Heart left ventricle (tissue), 16 donors: ENCODE measurements at regions of chr4 and their contacts with region 1.

Region 1: GRCh38 chr4:20422398-20422797 is 170.7 kb downstream of the SLIT2 start:
- DNase-seq: peak in 2 of 5 donors; percentile 22 to 23
- ATAC-seq: peak in 2 of 4 donors; percentile 64 to 74
- H3K4me3 ChIP-seq: no peak overlapping the region
- H3K27ac ChIP-seq: no peak overlapping the region
- H3K4me1 ChIP-seq: peaks cover 0 to 6% (median 0%) of the 10 kb centered on the region in 12 donors
- H3K27me3 ChIP-seq: no peaks in the 10 kb centered on the region
- CTCF ChIP-seq: peak; percentile 15 to 57 (median 35)
- POLR2A ChIP-seq: no peak

Region 2: DNA sequence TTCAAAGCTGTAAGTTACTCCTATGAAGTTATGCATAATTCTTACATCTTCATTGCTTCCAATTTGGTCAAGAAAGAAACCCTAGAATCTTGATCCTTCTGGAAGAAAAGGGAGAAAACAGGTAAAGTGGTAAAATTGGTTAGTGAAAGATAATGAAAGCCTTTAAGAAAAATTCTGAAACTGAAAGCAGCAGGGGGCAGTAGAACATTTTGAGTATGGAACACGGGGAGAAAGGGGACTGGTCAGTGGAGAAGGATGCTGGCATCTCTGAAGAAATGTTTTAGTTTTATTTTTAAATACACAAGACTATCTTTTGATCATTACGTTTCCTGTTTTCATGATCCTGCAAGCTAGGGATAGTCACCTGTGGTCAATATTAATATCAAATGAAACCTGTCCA is 116.4 kb before region 1 on chr4:
- intact Hi-C with region 1: loop called in 2 of 10 experiments (anchors 10 kb)
- DNase-seq: no peak
- ATAC-seq: no peak
- H3K4me3 ChIP-seq: no peak overlapping the region
- H3K27ac ChIP-seq: no peak overlapping the region
- H3K4me1 ChIP-seq: no peaks in the 10 kb centered on the region
- H3K27me3 ChIP-seq: no peaks in the 10 kb centered on the region
- CTCF ChIP-seq: peak in 6 of 12 donors; percentile 10 to 23 (median 18)
- POLR2A ChIP-seq: no peak